Sciatic nerve (tissue), 2 donors: ENCODE measurements at regions of chr16 and their contacts with region 1.

Region 1: GRCh38 chr16:17744903-17745575 is 274.3 kb upstream of the XYLT1 start:
- DNase-seq: no peak
- ATAC-seq: no peak

Region 2: GRCh38 chr16:17261197-17261858 is 483.7 kb before region 1 on chr16:
- intact Hi-C with region 1: loop called (anchors 5 kb)
- DNase-seq: no peak
- ATAC-seq: no peak

Region 3: DNA sequence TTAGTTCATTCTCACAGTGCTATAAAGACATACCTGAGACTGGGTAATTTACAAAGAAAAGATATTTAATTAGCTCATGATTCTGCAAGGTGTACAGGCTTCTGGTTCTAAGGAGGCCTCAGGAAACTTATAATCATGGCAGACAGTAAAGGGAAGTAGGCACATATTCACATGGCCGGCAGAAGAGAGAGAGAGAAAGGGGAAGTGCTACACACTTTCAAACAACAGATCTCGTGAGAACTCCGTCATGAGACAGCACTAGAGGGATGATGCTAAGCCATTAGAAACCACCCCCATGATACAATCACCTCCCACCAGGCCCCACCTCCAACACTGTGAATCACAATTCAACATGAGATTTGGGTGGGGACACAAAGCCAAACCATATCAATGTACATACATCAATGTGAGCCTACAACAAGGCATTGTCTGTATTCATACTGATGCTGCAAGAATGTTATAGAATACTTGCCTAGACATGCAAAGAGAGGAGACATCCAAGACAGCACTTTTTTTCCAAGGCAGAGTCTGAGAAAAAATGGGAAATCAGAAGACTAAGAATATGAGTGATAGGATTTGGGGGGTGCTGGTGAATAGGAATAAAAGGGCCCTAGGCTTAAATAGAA is 159.5 kb before region 1 on chr16:
- intact Hi-C with region 1: no loop called
- DNase-seq: no peak
- ATAC-seq: no peak

Region 4: GRCh38 chr16:17617021-17617552 is 128.0 kb before region 1 on chr16:
- intact Hi-C with region 1: no loop called
- DNase-seq: no peak
- ATAC-seq: no peak